Panc1 (cell line): ENCODE measurements at regions of chr9 and their contacts with region 1.

Region 1: GRCh38 chr9:132169672-132170392 is 8.0 kb downstream of the NTNG2 start:
- DNase-seq: no peak
- ATAC-seq: peak; percentile 83
- H3K4me3 ChIP-seq: no peak overlapping the region
- H3K27ac ChIP-seq: no peak overlapping the region
- H3K4me1 ChIP-seq: no peaks in the 10 kb centered on the region
- H3K27me3 ChIP-seq: no peaks in the 10 kb centered on the region
- CTCF ChIP-seq: peak; percentile 91

Region 2: DNA sequence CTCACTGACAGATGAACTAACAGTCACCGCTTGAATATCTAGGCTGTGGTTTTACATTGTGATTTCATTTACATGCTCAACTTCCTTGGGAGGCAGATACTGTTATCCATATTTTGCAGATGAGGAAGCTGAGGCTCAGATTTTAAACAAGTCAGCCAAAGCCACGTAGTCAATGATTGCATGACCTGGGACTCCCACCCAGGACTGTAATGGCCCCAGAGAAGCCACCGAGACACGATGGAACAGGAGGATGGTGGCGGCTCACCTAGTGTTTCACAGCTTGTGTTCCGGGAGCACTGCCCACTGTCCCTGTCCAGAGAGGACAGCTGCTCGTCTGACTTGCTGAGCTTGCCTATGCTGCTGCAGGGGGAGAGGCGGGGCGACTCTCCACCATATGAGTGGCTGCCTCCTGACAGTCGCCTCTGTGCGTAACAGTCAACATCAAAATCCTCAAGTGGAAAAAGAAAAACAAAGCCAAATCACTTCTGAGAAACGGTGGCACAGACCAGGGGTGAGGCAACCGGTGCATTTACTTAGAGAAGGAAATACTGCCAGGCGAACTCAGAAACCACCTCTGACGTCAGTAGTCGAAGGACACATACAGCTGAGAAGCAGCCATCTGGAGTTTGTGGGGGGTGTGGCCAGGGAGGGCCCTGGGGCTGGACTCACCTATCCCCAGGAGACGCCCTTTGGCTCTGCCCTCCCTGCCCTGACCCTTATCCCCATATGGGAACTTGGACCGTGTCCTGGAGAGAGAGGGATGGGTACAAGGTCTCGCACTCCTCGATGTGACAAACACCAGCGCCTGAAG is 542.0 kb before region 1 on chr9:
- CTCF ChIA-PET with region 1: no interaction called
- POLR2A ChIA-PET with region 1: no interaction called
- in situ Hi-C with region 1: no loop called
- intact Hi-C with region 1: no loop called
- DNase-seq: no peak
- ATAC-seq: no peak
- H3K4me3 ChIP-seq: no peak overlapping the region
- H3K27ac ChIP-seq: no peak overlapping the region
- H3K4me1 ChIP-seq: no peaks in the 10 kb centered on the region
- H3K27me3 ChIP-seq: no peaks in the 10 kb centered on the region
- CTCF ChIP-seq: no peak

Region 3: GRCh38 chr9:131762356-131762932 is 407.4 kb before region 1 on chr9:
- CTCF ChIA-PET with region 1: interaction called, 5 read pairs
- POLR2A ChIA-PET with region 1: no interaction called
- in situ Hi-C with region 1: no loop called
- intact Hi-C with region 1: loop called (anchors 10 kb)
- DNase-seq: no peak
- ATAC-seq: peak; percentile 94
- H3K4me3 ChIP-seq: no peak overlapping the region; a peak in 1 of 4 replicates
- H3K27ac ChIP-seq: no peak overlapping the region
- H3K4me1 ChIP-seq: no peaks in the 10 kb centered on the region
- H3K27me3 ChIP-seq: no peaks in the 10 kb centered on the region
- CTCF ChIP-seq: peak; percentile 85

Region 4: DNA sequence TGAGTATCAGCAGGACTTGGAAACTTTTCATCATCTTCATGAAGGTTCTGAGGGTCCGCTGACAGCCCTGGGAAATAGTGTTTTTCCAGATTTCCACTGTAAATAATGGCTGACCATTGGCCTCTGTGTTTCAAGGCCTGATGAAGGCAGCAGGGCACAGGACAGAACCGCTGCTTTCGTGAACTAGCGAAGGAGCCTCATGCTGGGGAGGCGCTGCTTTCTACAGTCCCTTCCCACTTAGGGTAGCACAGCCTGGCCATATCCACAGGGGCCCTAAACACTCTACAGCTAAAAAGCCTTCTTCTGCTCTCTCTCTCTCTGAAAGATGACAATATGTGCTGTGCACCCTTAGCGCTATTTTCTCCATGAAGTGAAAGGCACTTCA is 208.3 kb before region 1 on chr9:
- CTCF ChIA-PET with region 1: no interaction called
- POLR2A ChIA-PET with region 1: no interaction called
- in situ Hi-C with region 1: no loop called
- intact Hi-C with region 1: no loop called
- DNase-seq: no peak
- ATAC-seq: no peak
- H3K4me3 ChIP-seq: no peak overlapping the region
- H3K27ac ChIP-seq: no peak overlapping the region
- H3K4me1 ChIP-seq: no peaks in the 10 kb centered on the region
- H3K27me3 ChIP-seq: no peaks in the 10 kb centered on the region
- CTCF ChIP-seq: no peak

Region 5: DNA sequence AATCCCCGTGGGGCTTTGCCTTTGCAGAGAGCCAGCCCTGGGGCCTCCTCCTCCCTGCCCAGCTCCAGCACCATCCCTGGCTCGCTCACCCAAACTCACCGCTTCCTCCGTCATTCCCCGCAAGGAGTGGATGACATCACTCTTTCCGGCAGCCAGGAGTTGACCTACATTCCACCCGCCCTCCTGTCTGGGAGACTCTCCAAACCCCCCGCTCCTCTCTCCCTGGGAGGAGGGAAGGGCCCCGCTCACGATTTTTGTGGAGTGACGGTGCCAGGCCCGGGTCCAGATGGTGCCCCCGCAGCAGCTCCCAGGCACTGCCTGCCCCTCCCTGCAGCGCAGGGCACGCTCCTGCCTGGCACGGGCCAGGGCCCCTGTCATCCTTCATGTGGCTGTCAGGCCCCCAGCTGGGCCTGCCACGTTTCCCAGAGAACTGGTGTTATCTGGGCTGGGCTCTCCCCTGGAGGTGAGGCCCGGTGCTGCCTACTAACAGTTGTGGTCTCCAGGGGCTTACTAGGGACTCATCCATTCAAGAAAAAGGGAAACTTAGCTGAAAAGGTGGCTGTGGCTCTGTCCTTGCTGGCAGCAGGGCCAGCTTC is 44.3 kb after region 1 on chr9:
- CTCF ChIA-PET with region 1: no interaction called
- POLR2A ChIA-PET with region 1: no interaction called
- in situ Hi-C with region 1: no loop called
- intact Hi-C with region 1: no loop called
- DNase-seq: no peak
- ATAC-seq: 0 out of 2 replicates have a peak, but pooled peaks have one; percentile 60
- H3K4me3 ChIP-seq: no peak overlapping the region
- H3K27ac ChIP-seq: no peak overlapping the region
- H3K4me1 ChIP-seq: no peaks in the 10 kb centered on the region; the same call in 1 of the 2 replicates
- H3K27me3 ChIP-seq: no peaks in the 10 kb centered on the region
- CTCF ChIP-seq: no peak

Region 6: GRCh38 chr9:132235946-132236661 is 66.3 kb after region 1 on chr9:
- CTCF ChIA-PET with region 1: interaction called, 15 read pairs
- POLR2A ChIA-PET with region 1: interaction called, 9 read pairs
- in situ Hi-C with region 1: no loop called
- intact Hi-C with region 1: loop called (anchors 5 kb)
- DNase-seq: peak; percentile 54
- ATAC-seq: peak; percentile 64
- H3K4me3 ChIP-seq: no peak overlapping the region
- H3K27ac ChIP-seq: no peak overlapping the region
- H3K4me1 ChIP-seq: no peaks in the 10 kb centered on the region
- H3K27me3 ChIP-seq: no peaks in the 10 kb centered on the region
- CTCF ChIP-seq: peak; percentile 92

Region 7: GRCh38 chr9:132327537-132327936 is 157.7 kb after region 1 on chr9:
- CTCF ChIA-PET with region 1: interaction called, 10 read pairs
- POLR2A ChIA-PET with region 1: no interaction called
- in situ Hi-C with region 1: no loop called
- intact Hi-C with region 1: no loop called
- DNase-seq: no peak
- ATAC-seq: no peak
- H3K4me3 ChIP-seq: no peak overlapping the region
- H3K27ac ChIP-seq: no peak overlapping the region
- H3K4me1 ChIP-seq: no peaks in the 10 kb centered on the region
- H3K27me3 ChIP-seq: no peaks in the 10 kb centered on the region
- CTCF ChIP-seq: no peak